ENCODE measurements at regions of chr17 and their contacts with region 1.

Region 1: GRCh38 chr17:36553459-36553858 is 8.7 kb downstream of the GGNBP2 start:
- DNase-seq: no peak
- ATAC-seq: no peak
- H3K4me3 ChIP-seq: no peak overlapping the region
- H3K27ac ChIP-seq: no peak overlapping the region
- H3K4me1 ChIP-seq: peaks cover 3 to 65% of the 10 kb centered on the region in 2 donors
- H3K27me3 ChIP-seq: no peaks in the 10 kb centered on the region
- CTCF ChIP-seq: no peak

Region 2: GRCh38 chr17:36486204-36487194 is 67.0 kb before region 1 on chr17 and contains the start of gene ZNHIT3:
- intact Hi-C with region 1: no loop called
- DNase-seq: peak; percentile 88 to 96 (median 94)
- ATAC-seq: peak; percentile 95
- H3K4me3 ChIP-seq: peak within 1 kb of the TSS; percentile 79 to 96
- H3K27ac ChIP-seq: peak within 1 kb of the TSS; percentile 72 to 75
- H3K4me1 ChIP-seq: peaks cover 16 to 49% of the 10 kb centered on the region in 2 donors
- H3K27me3 ChIP-seq: peaks cover 3 to 26% of the 10 kb centered on the region in 2 donors
- CTCF ChIP-seq: no peak
- polyA plus RNA-seq, gene ZNHIT3: 52.5 to 65.1 (median 58.8) TPM

Region 3: GRCh38 chr17:36586138-36586537 is 32.7 kb after region 1 on chr17:
- intact Hi-C with region 1: loop called in 1 of 2 experiments (anchors 2 kb)
- DNase-seq: no peak
- ATAC-seq: no peak
- H3K4me3 ChIP-seq: no peak overlapping the region
- H3K27ac ChIP-seq: no peak overlapping the region
- H3K4me1 ChIP-seq: peaks cover 0 to 4% of the 10 kb centered on the region in 2 donors
- H3K27me3 ChIP-seq: no peaks in the 10 kb centered on the region
- CTCF ChIP-seq: no peak

Region 4: GRCh38 chr17:36608794-36609497 is 55.5 kb after region 1 on chr17:
- intact Hi-C with region 1: no loop called
- DNase-seq: peak in 2 of 4 donors; percentile 39 to 52
- ATAC-seq: peak; percentile 81
- H3K4me3 ChIP-seq: no peak overlapping the region
- H3K27ac ChIP-seq: no peak overlapping the region
- H3K4me1 ChIP-seq: peaks cover 0 to 21% of the 10 kb centered on the region in 2 donors
- H3K27me3 ChIP-seq: peaks cover 0 to 12% of the 10 kb centered on the region in 2 donors
- CTCF ChIP-seq: peak in 1 of 2 donors; percentile 20

Measured in left lung (tissue), 14 donors.